Posterior vena cava (tissue), 2 donors: ENCODE measurements at regions of chr12 and their contacts with region 1.

Region 1: DNA sequence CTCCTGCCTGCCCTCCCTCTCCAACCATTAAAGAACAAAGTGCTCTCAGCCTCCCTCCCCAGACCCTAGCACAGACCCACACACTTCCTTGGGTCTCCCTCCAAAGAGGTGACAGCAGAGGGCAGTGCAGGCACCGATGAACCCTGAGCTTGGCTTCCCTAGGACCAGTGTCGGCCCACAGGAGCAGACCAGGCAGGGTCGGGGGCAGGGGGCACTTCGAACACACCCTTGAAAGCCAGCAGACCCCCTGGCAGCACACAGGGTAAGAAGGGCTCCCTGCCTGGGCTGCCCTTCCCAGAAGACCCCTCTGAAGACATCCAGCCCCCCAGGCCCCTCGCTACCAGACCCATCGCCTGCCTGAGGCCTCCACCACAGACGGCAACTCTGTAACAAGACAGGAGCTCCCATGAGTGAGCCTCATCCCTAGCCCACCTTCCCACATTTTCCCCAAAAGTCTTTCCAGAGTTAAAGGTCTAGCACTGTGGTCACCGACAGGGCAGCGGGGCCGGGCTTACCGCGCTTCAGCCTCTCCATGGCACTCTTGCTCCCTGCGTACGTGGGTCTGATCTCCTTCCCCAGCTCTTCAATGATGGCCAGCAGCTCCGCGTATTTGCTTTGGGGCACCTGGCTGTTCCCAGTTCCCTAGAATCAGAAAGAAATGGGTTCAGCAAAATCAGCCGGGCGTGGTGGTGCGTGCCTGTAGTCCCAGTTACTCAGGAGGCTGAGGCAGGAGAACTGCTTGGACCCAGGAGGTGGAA is 6.8 kb downstream of the CDK2AP1 start:
- DNase-seq: peak; percentile 57

Region 2: GRCh38 chr12:123337070-123337469 is 72.2 kb after region 1 on chr12:
- intact Hi-C with region 1: no loop called
- DNase-seq: no peak

Region 3: DNA sequence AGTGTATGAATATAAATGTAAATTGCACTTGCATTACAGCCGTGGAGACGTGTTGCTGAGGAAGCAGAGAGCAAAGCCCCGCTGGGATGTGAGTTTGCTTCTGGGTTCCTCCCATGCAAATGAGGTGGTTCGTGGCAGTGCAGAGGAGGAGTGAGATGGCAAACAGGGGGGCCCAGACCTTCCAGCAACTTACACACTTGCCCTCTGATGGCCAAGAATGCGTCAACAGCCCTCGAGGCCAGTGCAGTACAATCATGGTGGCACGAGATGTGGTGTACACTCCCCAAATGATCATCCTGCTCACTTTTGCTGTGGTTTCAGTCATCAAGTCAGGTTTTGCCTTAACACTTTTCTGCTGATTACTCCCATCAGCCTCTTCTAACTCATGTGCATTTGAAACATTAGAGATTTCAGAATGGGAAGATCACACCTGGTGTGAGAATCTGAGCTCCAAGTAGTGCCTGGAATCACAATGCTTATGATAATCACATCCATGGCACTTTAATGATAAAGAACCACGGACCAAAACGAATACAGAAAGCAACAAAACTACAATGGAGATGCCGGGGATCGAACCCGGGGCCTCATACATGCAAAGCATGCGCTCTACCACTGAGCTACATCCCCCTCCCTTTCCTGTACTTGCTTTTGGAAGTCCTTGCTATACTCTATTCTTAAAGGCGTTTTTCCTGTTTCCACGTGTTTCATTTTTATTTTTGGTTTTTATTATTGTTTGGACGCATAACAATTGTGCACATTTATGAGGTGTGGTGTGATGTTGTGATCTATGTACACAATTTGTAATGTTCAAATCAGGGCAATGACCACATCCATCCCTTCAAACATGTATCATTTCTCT is 1656.6 kb after region 1 on chr12:
- intact Hi-C with region 1: loop called in 1 of 2 experiments (anchors 5 kb)
- DNase-seq: no peak